ENCODE measurements at regions of chr12 and their contacts with region 1.

Region 1: GRCh38 chr12:49673446-49674317 is 33.5 kb downstream of the FMNL3 start:
- DNase-seq: peak; percentile 78 to 90
- ATAC-seq: peak; percentile 90
- H3K4me3 ChIP-seq: peak overlapping the region in 1 of 4 donors; percentile 12
- H3K27ac ChIP-seq: peak overlapping the region; percentile 81 to 90 (median 84)
- H3K4me1 ChIP-seq: peaks cover 61 to 68% of the 10 kb centered on the region in 2 donors
- H3K27me3 ChIP-seq: no peaks in the 10 kb centered on the region
- CTCF ChIP-seq: peak; percentile 37 to 71 (median 60)
- POLR2A ChIP-seq: peak; percentile 54 to 71

Region 2: DNA sequence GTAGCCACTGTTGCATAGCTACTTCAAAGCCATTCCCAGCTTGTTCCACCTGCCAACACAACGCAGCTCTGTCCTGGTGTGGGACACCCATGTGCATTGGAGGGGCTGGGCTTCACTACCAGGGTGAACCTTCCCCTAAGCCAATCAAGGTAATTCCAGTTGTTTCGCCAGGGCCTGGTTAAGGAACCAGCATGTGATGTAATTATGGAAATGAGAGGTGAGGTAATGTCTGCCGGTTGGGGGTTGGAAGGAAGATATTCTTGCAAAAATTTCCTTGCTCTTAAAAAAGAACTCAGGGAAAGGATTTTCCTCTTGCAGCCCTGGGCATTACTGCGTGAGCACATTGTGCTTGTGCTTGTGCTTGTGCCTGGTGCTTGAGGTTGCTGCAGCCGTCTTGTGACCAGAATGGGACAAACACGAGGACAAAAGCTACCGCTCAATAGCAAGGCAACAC is 393.9 kb before region 1 on chr12:
- in situ Hi-C with region 1: no loop called
- intact Hi-C with region 1: no loop called
- DNase-seq: no peak
- ATAC-seq: no peak
- H3K4me3 ChIP-seq: no peak overlapping the region
- H3K27ac ChIP-seq: no peak overlapping the region
- H3K4me1 ChIP-seq: no peaks in the 10 kb centered on the region
- H3K27me3 ChIP-seq: peaks cover 9 to 13% (median 12%) of the 10 kb centered on the region in 3 donors
- CTCF ChIP-seq: no peak
- POLR2A ChIP-seq: no peak

Region 3: DNA sequence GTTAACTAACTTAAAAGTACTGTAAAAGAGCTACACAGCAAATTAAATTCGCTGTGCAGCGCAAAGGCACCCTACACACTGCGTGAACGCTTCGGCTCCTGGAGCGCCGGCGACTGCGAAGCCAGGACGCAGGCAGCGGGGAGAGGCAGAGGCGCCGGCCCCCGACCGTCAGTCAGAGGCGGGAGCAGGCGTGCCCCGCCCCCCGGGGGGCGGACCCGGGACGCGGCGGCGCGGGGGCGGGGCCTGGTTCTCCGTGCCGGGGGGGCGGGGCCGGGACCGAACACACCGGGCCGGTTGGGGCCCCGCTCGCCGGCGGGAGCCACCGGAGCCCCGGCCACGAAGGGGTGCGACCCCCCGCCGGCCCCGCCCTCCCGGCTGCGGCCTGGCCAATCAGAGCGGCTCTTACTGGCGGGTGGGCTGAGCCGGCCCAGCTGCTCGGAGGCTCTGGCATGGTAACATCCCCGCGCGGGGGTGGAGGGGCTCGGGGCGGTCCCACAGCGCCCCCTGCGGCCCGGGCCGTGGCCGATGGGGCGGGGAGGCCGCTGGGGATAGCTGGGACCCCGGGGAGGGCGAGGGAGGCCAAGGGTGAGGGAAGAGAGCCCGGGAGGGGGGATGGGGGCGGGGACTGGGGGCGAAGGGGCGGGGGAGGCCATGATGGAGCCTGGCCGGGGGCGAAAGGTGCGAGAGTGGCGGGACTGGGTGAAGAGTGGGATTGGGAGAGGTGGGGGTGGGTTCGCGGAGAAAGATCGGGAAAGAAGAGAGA is 50.4 kb before region 1 on chr12 and contains the start of gene PRPF40B:
- in situ Hi-C with region 1: no loop called
- intact Hi-C with region 1: loop called (anchors 2 kb)
- DNase-seq: peak; percentile 80 to 90
- ATAC-seq: peak; percentile 87 to 88
- H3K4me3 ChIP-seq: peak within 1 kb of the TSS; percentile 52 to 84 (median 65)
- H3K27ac ChIP-seq: peak within 1 kb of the TSS; percentile 80 to 91 (median 84)
- H3K4me1 ChIP-seq: peaks cover 11 to 15% of the 10 kb centered on the region in 2 donors
- H3K27me3 ChIP-seq: no peaks in the 10 kb centered on the region
- CTCF ChIP-seq: peak; percentile 36 to 65 (median 54)
- POLR2A ChIP-seq: peak; percentile 91 to 94
- total RNA-seq, gene PRPF40B: 17.6 to 21.3 (median 20.2) TPM

Region 4: DNA sequence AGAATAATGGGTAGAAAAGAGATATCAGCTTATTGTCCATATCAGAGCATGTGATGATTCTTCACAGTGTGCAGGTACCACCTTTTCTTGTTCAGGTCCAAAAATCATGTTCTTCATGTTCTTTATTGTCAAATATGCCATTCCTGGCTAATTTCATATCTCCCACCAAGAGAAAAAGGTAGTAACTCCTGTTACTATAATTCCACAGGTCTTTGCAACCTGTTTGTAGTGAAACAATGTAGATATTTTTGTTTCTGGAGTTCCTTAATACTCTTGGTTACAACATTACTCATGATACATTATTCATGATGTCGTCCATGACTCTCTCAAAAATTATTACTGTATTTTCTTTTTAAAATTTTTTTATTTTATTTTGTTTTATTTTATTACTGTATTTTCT is 56.4 kb after region 1 on chr12:
- in situ Hi-C with region 1: no loop called
- intact Hi-C with region 1: no loop called
- DNase-seq: no peak
- ATAC-seq: no peak
- H3K4me3 ChIP-seq: no peak overlapping the region
- H3K27ac ChIP-seq: no peak overlapping the region
- H3K4me1 ChIP-seq: no peaks in the 10 kb centered on the region
- H3K27me3 ChIP-seq: no peaks in the 10 kb centered on the region
- CTCF ChIP-seq: no peak
- POLR2A ChIP-seq: no peak

Region 5: GRCh38 chr12:49740930-49741881 is 67.5 kb after region 1 on chr12 and contains the start of gene TMBIM6:
- in situ Hi-C with region 1: no loop called
- intact Hi-C with region 1: no loop called
- DNase-seq: peak; percentile 100
- ATAC-seq: peak; percentile 98 to 99
- H3K4me3 ChIP-seq: peak within 1 kb of the TSS; percentile 80 to 100 (median 88)
- H3K27ac ChIP-seq: peak within 1 kb of the TSS; percentile 97 to 100 (median 98)
- H3K4me1 ChIP-seq: peaks cover 31 to 38% of the 10 kb centered on the region in 2 donors
- H3K27me3 ChIP-seq: no peaks in the 10 kb centered on the region
- CTCF ChIP-seq: peak; percentile 91 to 98 (median 95)
- POLR2A ChIP-seq: peak; percentile 98 to 99
- total RNA-seq, gene TMBIM6: 181 to 310 (median 224) TPM

Measured in gastrocnemius medialis (tissue), 4 donors.